ENCODE measurements at regions of chr14 and their contacts with region 1.

Region 1: GRCh38 chr14:72594099-72594901 is 299.6 kb downstream of the DPF3 start:
- DNase-seq: peak; percentile 74
- ATAC-seq: peak; percentile 92
- H3K4me3 ChIP-seq: no peak overlapping the region
- H3K27ac ChIP-seq: no peak overlapping the region
- H3K4me1 ChIP-seq: peaks cover 28% of the 10 kb centered on the region
- H3K27me3 ChIP-seq: no peaks in the 10 kb centered on the region; a peak in 1 of 4 replicates
- CTCF ChIP-seq: no peak
- EP300 ChIP-seq: peak; percentile 76 to 89; a peak in 3 of 4 replicates
- POLR2A ChIP-seq: no peak
- RAD21 ChIP-seq: no peak

Region 2: DNA sequence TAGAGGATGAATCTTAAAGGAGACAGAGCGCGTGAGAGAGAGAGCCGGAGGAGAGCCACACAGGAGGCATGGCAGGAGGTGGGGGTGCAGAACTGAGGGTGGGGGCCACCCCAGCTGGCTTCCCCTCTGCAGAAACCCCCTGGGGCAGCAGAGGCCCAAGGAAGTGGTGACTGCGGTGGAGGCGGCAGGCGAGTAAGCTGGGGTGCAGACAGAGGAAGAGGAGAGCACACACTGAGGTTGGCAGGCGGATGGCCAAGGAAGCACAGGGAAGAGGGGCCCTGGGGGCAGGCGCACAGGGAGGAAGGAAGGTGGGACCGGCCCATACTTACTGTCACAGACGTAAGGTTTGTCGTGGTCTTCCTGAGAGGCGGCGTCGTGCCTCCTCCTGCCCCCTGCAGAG is 119.8 kb after region 1 on chr14:
- CTCF ChIA-PET with region 1: interaction called, 4 read pairs
- POLR2A ChIA-PET with region 1: interaction called, 4 read pairs
- RAD21 ChIA-PET with region 1: interaction called, 7 read pairs
- SMC1A ChIA-PET with region 1: interaction called, 10 read pairs
- in situ Hi-C with region 1: no loop called
- intact Hi-C with region 1: no loop called
- DNase-seq: peak; percentile 31
- ATAC-seq: peak; percentile 78
- H3K4me3 ChIP-seq: no peak overlapping the region
- H3K27ac ChIP-seq: no peak overlapping the region
- H3K4me1 ChIP-seq: peaks cover 24% of the 10 kb centered on the region
- H3K27me3 ChIP-seq: no peaks in the 10 kb centered on the region
- CTCF ChIP-seq: no peak
- EP300 ChIP-seq: peak; percentile 60 to 68; a peak in 3 of 4 replicates
- POLR2A ChIP-seq: no peak
- RAD21 ChIP-seq: no peak

Measured in GM12878 (cell line).